ENCODE measurements at regions of chr11 and their contacts with region 1.

Region 1: GRCh38 chr11:67082035-67082791 is 25.6 kb downstream of the RHOD start:
- H3K4me3 ChIP-seq: no peak overlapping the region
- H3K27ac ChIP-seq: no peak overlapping the region
- H3K4me1 ChIP-seq: no peaks in the 10 kb centered on the region
- CTCF ChIP-seq: no peak

Region 2: DNA sequence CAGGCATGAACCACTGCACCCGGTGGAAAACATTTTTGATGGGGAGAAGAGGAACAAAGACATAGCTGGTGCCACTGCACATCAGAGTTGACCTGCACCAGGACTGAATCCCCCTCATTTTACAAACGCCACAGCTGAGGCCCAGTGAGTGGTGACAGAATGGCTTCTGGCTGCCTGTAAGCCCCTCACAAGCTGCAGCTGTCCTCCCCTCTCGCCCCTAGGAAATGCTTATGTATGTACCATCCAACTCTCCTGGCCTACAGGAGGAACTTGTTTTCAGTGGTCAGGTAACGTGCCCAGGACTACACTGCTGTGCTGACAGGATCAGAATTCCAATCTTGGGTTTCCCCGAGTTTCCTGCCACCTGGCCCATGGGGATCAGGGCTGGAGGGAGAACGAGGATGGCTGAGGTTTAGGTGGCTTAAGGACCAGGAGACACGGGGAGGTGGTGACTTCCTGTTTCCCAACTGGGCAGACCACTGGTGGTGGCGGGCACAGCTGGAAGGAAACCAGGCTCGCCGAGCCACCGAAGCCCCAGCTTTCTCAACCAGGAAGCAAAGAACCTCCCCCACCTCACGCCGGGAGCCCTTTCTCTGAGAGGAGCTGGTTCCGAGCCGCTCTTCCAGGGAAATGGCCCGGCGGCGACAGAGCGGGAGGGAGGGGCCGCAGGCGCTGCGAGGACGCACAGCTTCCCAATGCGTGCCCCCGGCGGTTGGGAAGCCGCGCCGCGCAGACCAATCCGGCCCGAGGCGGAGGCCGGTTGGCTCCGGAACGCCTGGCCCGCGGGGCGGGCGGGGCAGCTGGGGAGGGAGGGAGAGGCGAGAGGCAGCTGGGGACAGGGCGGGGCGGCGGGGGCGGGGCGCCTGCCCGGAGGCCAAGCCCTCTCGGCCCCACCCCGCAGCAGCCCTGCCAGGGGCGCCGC is 226.4 kb before region 1 on chr11:
- CTCF ChIA-PET with region 1: no interaction called
- POLR2A ChIA-PET with region 1: no interaction called
- H3K4me3 ChIP-seq: peak overlapping the region; percentile 60
- H3K27ac ChIP-seq: peak overlapping the region; percentile 34; the same call in 1 of the 2 replicates
- H3K4me1 ChIP-seq: no peaks in the 10 kb centered on the region
- CTCF ChIP-seq: no peak

Region 3: DNA sequence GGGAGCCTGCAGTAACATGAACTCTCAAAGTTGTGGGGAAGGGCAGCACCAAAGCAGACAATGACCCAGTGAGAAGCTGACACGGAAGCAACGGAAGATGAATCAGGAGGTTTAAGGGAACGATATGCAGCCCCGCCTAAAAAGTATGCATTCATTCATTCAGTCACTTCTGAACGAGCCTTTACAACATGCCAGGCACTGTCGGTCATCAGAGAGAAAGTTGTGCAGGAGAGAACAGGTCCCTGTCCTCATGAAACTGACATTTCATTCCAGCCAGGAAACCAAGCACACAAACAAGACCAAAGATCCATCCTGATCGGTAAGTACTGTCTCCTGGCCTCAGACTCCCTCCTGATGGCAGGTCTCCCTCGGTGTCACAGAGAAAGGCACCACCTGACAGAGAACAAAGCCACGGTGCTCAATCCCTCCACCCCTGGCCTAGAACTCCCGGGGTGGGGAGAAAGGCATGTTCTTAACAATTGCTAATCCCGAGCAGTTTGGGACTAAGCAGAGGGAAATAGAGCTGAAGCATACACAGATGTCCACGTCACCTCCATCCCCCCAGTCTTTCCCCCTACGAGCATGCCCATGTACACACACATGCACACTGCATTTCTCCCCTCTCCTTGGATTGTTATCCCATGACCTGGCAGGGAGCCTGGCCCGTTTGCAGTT is 176.0 kb before region 1 on chr11:
- CTCF ChIA-PET with region 1: no interaction called
- POLR2A ChIA-PET with region 1: no interaction called
- H3K4me3 ChIP-seq: no peak overlapping the region
- H3K27ac ChIP-seq: no peak overlapping the region
- H3K4me1 ChIP-seq: no peaks in the 10 kb centered on the region; the same call in 1 of the 2 replicates
- CTCF ChIP-seq: no peak

Region 4: DNA sequence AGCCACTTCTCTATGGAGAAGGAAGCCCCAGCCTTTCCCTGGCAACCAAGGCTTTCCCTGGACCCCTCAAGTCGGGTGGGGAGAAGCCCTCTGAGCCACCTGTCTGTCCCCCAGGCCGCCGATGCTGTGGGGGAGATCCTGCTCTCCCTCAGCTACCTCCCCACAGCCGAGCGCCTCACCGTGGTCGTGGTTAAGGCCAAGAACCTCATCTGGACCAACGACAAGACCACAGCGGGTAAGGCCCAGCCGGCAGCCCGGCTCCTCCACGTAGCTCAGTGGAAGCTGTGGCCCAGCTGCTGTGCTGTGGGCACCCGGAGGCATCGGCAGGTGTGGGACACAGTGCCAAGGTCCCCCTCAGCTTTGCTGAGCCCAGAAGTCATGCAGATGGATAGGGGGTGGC is 37.7 kb before region 1 on chr11:
- CTCF ChIA-PET with region 1: no interaction called
- POLR2A ChIA-PET with region 1: no interaction called
- H3K4me3 ChIP-seq: no peak overlapping the region
- H3K27ac ChIP-seq: no peak overlapping the region
- H3K4me1 ChIP-seq: no peaks in the 10 kb centered on the region
- CTCF ChIP-seq: no peak

Region 5: DNA sequence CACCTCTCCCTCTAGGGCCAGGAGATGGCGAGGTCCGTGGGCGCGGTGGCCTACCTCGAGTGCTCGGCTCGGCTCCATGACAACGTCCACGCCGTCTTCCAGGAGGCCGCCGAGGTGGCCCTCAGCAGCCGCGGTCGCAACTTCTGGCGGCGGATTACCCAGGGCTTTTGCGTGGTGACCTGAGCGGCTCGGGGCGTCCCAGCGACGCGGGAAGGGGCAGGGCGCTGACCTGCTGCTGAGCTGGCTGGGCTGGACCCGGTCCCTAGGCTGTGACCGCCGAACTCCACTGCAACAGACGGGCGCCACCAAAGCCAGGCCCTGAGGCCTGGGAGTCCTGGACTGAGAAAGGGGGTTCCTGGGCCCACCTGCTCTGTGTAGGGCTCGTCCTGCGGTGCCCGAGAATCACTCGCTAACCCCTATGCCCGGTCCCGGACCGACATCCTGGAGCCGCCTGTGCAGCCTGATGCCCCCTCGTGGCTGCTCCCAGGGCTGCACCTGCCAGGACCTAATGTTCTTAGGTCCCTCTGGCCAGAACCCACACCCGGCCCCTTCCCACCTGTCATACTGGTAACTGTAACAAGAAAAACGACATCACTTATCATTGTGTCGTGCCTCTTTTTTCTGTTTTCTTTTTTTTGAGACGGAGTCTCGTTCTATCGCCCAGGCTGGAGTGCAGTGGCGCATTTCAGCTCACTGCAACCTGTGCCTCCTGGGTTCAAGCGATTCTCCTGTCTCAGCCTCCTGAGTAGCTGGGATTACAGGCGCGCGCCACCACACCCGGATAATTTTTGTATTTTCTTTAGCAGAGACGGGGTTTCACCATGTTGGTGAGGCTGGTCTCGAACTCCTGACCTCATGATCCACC is 10.6 kb before region 1 on chr11:
- CTCF ChIA-PET with region 1: interaction called, 13 read pairs
- POLR2A ChIA-PET with region 1: no interaction called
- H3K4me3 ChIP-seq: no peak overlapping the region
- H3K27ac ChIP-seq: no peak overlapping the region
- H3K4me1 ChIP-seq: no peaks in the 10 kb centered on the region
- CTCF ChIP-seq: peak; percentile 34; the same call in 1 of the 2 replicates

Measured in HEK293 (cell line).